B cell (primary cell): ENCODE measurements at regions of chr1 and their contacts with region 1.

Region 1: GRCh38 chr1:201149400-201149799 is 4.9 kb downstream of the TMEM9 start:
- DNase-seq: no peak
- ATAC-seq: no peak
- H3K4me3 ChIP-seq: no peak overlapping the region
- H3K4me3 Mint-ChIP-seq: no peak overlapping the region
- H3K27ac ChIP-seq: no peak overlapping the region
- H3K27ac Mint-ChIP-seq: no peak overlapping the region
- H3K4me1 ChIP-seq: peaks cover 5 to 11% of the 10 kb centered on the region in 2 donors
- H3K4me1 Mint-ChIP-seq: peaks cover 13% of the 10 kb centered on the region
- H3K27me3 ChIP-seq: no peaks in the 10 kb centered on the region
- H3K27me3 Mint-ChIP-seq: no peaks in the 10 kb centered on the region
- CTCF ChIP-seq: peak; percentile 23

Region 2: DNA sequence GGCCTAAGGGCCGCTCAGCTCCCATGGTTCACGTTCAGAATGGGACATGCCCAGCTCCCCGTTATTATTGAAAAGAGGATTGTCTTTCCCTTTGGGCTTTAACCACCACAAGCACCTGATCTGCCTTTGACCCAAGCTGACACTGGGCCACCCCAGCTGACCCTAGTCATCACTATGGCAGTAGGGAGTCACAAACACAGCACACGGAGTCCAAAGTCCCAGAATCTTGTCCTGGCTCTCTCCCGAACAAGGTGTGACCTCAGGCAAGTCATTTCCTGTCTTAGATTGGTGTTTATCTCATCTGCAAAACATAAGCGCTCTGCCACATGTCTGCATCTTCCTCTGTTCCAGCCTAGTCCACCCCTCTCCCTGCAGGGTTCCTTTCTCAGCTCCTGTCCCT is 72.7 kb after region 1 on chr1:
- CTCF ChIA-PET with region 1: interaction called, 5 read pairs
- POLR2A ChIA-PET with region 1: no interaction called
- intact Hi-C with region 1: loop called (anchors 2 kb)
- DNase-seq: no peak
- ATAC-seq: no peak
- H3K4me3 ChIP-seq: no peak overlapping the region
- H3K4me3 Mint-ChIP-seq: no peak overlapping the region
- H3K27ac ChIP-seq: no peak overlapping the region
- H3K27ac Mint-ChIP-seq: no peak overlapping the region
- H3K4me1 ChIP-seq: no peaks in the 10 kb centered on the region
- H3K4me1 Mint-ChIP-seq: no peaks in the 10 kb centered on the region
- H3K27me3 ChIP-seq: no peaks in the 10 kb centered on the region
- H3K27me3 Mint-ChIP-seq: peaks cover 9% of the 10 kb centered on the region
- CTCF ChIP-seq: no peak